ENCODE measurements at regions of chr2 and their contacts with region 1.

Region 1: GRCh38 chr2:126527836-126528507 is 128.0 kb upstream of the GYPC start:
- DNase-seq: peak in 3 of 5 donors; percentile 48 to 56 (median 54)
- H3K4me3 ChIP-seq: no peak overlapping the region
- H3K27ac ChIP-seq: no peak overlapping the region
- H3K4me1 ChIP-seq: no peaks in the 10 kb centered on the region
- H3K27me3 ChIP-seq: no peaks in the 10 kb centered on the region
- CTCF ChIP-seq: peak; percentile 60

Region 2: GRCh38 chr2:126059379-126059778 is 468.6 kb before region 1 on chr2:
- intact Hi-C with region 1: no loop called
- DNase-seq: no peak
- H3K4me3 ChIP-seq: no peak overlapping the region
- H3K27ac ChIP-seq: no peak overlapping the region
- H3K4me1 ChIP-seq: no peaks in the 10 kb centered on the region
- H3K27me3 ChIP-seq: no peaks in the 10 kb centered on the region
- CTCF ChIP-seq: no peak

Region 3: GRCh38 chr2:126220336-126220735 is 307.6 kb before region 1 on chr2:
- intact Hi-C with region 1: no loop called
- DNase-seq: peak in 2 of 5 donors; percentile 4 to 37
- H3K4me3 ChIP-seq: no peak overlapping the region
- H3K27ac ChIP-seq: no peak overlapping the region
- H3K4me1 ChIP-seq: no peaks in the 10 kb centered on the region
- H3K27me3 ChIP-seq: no peaks in the 10 kb centered on the region
- CTCF ChIP-seq: no peak

Region 4: DNA sequence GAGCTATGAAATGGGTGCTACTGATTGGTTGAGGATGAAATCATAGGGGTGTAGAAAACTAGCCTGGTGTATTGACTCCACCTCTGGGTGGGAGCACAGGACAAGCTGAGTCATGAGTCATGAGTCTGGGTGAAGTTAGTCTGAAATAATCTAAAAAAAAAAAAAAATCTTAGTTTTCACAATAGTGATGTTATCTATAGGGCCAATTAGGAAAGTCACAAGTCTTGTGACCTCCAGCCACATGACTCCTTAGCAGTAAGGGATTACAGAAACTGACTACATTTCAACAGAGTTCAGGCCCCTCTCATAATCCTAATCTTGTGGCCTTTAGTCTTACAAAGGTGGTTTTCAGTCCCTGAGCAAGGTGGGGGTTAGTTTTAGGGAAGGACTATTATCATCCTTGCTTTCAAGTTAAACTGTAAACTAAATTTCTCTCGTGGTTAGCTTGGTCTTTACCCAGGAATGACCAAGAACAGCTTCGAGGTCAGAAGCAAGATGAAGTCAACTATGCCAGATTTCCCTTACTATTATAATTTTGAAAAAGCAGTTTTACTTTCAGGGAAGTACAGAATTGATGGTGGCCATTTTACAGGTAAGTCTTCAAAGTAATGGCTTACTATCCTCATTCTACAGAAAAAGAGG is 210.1 kb before region 1 on chr2:
- intact Hi-C with region 1: no loop called
- DNase-seq: no peak
- H3K4me3 ChIP-seq: no peak overlapping the region
- H3K27ac ChIP-seq: no peak overlapping the region
- H3K4me1 ChIP-seq: no peaks in the 10 kb centered on the region
- H3K27me3 ChIP-seq: no peaks in the 10 kb centered on the region
- CTCF ChIP-seq: no peak

Region 5: GRCh38 chr2:126776692-126777619 is 249.0 kb after region 1 on chr2:
- intact Hi-C with region 1: loop called (anchors 5 kb)
- DNase-seq: peak; percentile 86 to 92 (median 87)
- H3K4me3 ChIP-seq: peak overlapping the region; percentile 82 to 91 (median 87)
- H3K27ac ChIP-seq: peak overlapping the region; percentile 47 to 67
- H3K4me1 ChIP-seq: no peaks in the 10 kb centered on the region
- H3K27me3 ChIP-seq: no peaks in the 10 kb centered on the region
- CTCF ChIP-seq: peak; percentile 91

Measured in kidney (tissue), 22 donors.